IMR-90 (cell line): ENCODE measurements at regions of chr4 and their contacts with region 1.

Region 1: GRCh38 chr4:5998333-5998936 is 19.8 kb downstream of the C4orf50 start:
- DNase-seq: peak; percentile 61
- ATAC-seq: peak; percentile 98
- H3K4me3 ChIP-seq: no peak overlapping the region
- H3K27ac ChIP-seq: no peak overlapping the region
- H3K4me1 ChIP-seq: no peaks in the 10 kb centered on the region
- H3K27me3 ChIP-seq: no peaks in the 10 kb centered on the region; the same call in 1 of the 2 replicates
- CTCF ChIP-seq: peak; percentile 81
- POLR2A ChIP-seq: no peak
- RAD21 ChIP-seq: peak; percentile 63

Region 2: DNA sequence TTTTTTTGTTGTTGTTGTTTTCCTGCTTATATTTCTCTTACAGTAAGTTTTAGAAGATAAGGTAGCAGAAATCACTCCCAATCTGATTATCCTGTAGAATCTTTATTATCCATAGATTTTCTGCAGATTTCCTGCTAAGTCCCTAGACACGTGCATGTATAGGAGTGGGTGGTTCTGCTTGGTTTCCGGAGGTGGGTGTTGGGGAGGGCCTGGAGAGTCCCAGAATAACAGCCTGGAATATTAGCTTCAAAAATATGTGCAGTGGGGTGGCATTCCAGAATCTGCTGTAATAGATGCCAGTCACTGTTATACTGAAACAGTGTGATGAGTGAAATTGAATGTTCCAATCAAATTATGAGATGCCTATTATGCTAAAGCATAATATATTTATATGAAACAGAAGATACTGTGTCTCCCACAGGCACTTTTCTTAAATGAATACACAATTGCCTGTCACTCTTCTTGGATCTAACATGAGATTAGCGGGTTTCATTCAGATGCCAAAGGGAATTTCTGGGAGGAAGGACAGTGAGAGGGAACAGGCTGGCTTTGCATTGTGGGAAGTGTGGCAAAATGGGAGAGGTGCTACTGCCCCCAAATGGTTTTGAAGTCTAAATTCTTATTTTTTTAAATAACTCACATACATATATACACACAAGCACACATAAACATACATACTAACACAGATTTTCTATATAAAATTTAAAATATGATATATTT is 17.8 kb before region 1 on chr4:
- CTCF ChIA-PET with region 1: interaction called, 10 read pairs
- POLR2A ChIA-PET with region 1: no interaction called
- dilution Hi-C with region 1: no loop called
- in situ Hi-C with region 1: no loop called
- intact Hi-C with region 1: no loop called
- DNase-seq: no peak
- ATAC-seq: no peak
- H3K4me3 ChIP-seq: no peak overlapping the region
- H3K27ac ChIP-seq: no peak overlapping the region
- H3K4me1 ChIP-seq: no peaks in the 10 kb centered on the region
- H3K27me3 ChIP-seq: no peaks in the 10 kb centered on the region
- CTCF ChIP-seq: no peak
- POLR2A ChIP-seq: no peak
- RAD21 ChIP-seq: no peak

Region 3: DNA sequence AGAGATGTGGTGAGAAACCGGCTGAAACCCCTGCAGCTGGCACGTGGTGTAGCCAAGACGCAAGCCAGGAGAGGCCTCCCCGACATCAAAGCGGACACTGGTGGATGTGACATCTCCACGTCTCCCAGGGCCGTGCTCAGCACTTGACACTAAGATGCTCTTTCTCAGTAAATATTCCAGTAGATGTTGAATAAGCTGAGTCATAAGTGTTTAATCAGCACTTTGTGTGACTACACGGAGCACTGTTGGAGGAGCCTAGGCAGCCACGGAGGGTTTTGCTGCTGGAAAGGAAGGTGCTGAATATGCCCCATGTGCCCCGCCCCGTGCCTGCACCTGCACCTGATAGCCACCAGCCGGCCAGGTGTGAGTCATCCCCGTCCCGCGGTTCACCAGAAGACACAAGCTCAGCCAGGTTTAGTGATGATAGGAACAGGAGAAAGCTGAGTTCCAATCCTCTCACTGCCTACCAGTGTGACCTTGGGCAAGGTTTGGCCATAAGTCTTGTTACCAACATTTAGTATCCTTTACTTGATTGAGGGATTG is 48.8 kb after region 1 on chr4:
- CTCF ChIA-PET with region 1: no interaction called
- POLR2A ChIA-PET with region 1: no interaction called
- dilution Hi-C with region 1: no loop called
- in situ Hi-C with region 1: no loop called
- intact Hi-C with region 1: no loop called
- DNase-seq: no peak
- ATAC-seq: no peak
- H3K4me3 ChIP-seq: no peak overlapping the region
- H3K27ac ChIP-seq: no peak overlapping the region
- H3K4me1 ChIP-seq: no peaks in the 10 kb centered on the region
- H3K27me3 ChIP-seq: no peaks in the 10 kb centered on the region
- CTCF ChIP-seq: no peak
- POLR2A ChIP-seq: no peak
- RAD21 ChIP-seq: no peak